Kidney (tissue), 22 donors: ENCODE measurements at regions of chr7 and their contacts with region 1.

Region 1: DNA sequence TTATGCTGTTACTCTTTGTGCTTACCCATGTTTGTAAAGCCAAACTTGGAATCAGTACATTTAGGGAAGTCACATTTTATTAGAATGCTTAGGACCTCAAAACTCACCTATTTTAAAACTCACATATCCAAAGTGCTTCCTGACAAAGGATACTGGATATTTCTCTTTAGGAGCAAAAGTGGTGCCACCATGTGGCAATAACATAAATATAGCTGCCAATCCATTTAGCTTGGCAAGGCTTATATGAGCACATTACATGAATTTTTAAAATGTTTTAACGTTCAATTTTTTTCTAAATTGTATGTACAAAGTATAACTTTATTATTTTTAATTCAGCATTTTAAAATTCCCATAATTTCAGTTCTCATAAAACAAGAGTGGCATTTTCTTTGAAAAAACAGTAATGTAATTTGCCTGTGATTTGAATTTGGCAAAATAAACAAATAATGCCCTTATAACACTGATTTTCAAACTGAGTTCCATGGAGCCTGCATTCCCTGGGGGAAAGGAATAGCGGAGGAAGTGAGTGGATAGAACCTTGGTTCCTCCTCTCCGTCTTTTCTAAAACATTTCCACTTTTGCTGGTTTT is 75.4 kb downstream of the HDAC9 start:
- DNase-seq: peak in 2 of 5 donors; percentile 50 to 66
- H3K4me3 ChIP-seq: no peak overlapping the region
- H3K27ac ChIP-seq: no peak overlapping the region
- H3K4me1 ChIP-seq: no peaks in the 10 kb centered on the region
- H3K27me3 ChIP-seq: no peaks in the 10 kb centered on the region
- CTCF ChIP-seq: peak; percentile 52

Region 2: GRCh38 chr7:18352339-18353255 is 218.4 kb before region 1 on chr7:
- intact Hi-C with region 1: loop called (anchors 10 kb)
- DNase-seq: peak in 3 of 5 donors; percentile 64 to 75 (median 74)
- H3K4me3 ChIP-seq: no peak overlapping the region
- H3K27ac ChIP-seq: no peak overlapping the region
- H3K4me1 ChIP-seq: no peaks in the 10 kb centered on the region
- H3K27me3 ChIP-seq: no peaks in the 10 kb centered on the region
- CTCF ChIP-seq: peak; percentile 57